Activated T-helper 2 cell treated with anti-CD3 and anti-CD28 coated beads, Interferon-gamma antibody, Interleukin-2, Interleukin-4, amounts not matched to agents 10 μg/mL and 5 μg/mL and 100 μg/mL, durations not matched to agents 14 hours and 24 hours and 36 hours (primary cell): ENCODE measurements at regions of chr1 and their contacts with region 1.

Region 1: GRCh38 chr1:10170239-10170574 is 40.2 kb upstream of the KIF1B start:
- DNase-seq: peak; percentile 18
- H3K4me3 Mint-ChIP-seq: peak overlapping the region; percentile 63
- H3K27ac Mint-ChIP-seq: peak overlapping the region; percentile 87
- H3K4me1 Mint-ChIP-seq: peaks cover 54% of the 10 kb centered on the region
- H3K27me3 Mint-ChIP-seq: no peaks in the 10 kb centered on the region

Region 2: DNA sequence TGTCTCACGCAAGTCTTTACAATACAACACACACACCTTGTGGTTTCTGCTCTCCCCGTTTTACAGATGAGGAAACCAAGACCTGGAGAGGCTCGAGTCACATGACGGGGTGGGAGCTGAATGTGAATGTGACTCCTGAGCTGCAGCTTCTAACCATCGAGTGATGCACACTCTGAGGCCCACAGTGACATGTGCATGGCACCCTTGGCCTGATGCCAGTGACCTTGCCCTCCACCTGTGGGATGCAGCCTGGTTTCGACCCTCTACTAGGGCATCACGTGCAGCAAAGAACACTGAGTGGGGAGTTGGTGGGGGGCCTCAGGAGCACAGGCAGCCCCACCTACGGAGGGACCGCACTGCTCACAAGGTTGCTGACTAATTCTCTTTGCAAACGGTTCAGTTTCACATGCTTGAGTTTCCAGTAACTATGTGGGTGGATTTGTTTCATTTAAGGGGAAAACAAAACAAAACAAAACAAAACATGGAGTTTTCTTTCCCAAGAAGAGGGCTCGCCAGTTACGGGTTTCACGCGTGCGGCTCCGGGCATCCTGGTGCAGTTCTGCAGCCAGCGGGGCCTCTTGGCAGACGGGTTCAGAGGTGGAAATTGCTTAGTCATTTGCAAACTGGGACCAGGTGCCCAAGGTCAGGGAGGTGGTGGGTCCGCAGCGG is 854.7 kb before region 1 on chr1:
- intact Hi-C with region 1: no loop called
- DNase-seq: peak; percentile 55
- H3K4me3 Mint-ChIP-seq: peak overlapping the region; percentile 57
- H3K27ac Mint-ChIP-seq: peak overlapping the region; percentile 89
- H3K4me1 Mint-ChIP-seq: peaks cover 35% of the 10 kb centered on the region
- H3K27me3 Mint-ChIP-seq: no peaks in the 10 kb centered on the region

Region 3: GRCh38 chr1:10186331-10187025 is 16.3 kb after region 1 on chr1:
- intact Hi-C with region 1: loop called (anchors 1 kb)
- DNase-seq: no peak
- H3K4me3 Mint-ChIP-seq: no peak overlapping the region
- H3K27ac Mint-ChIP-seq: no peak overlapping the region
- H3K4me1 Mint-ChIP-seq: peaks cover 10% of the 10 kb centered on the region
- H3K27me3 Mint-ChIP-seq: no peaks in the 10 kb centered on the region

Region 4: DNA sequence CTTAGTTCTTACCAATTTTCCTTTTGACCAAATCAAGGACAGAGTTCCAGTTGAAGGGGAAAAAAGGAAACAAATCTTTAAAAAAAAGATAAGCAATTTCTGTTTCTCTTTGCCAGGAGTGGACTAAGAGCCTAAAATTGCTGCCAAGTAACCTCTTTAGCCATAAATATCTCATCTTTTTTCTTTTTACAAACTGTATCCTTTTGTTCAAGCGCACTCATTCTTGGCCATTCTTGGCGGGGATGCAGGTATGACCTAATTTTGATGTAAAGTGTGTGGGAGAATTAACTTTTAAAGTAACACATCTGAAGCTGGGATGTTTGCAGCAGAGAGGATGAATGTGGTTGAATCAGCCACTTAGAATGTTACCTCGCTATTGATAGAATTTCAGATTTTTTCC is 26.8 kb after region 1 on chr1:
- intact Hi-C with region 1: no loop called
- DNase-seq: no peak
- H3K4me3 Mint-ChIP-seq: no peak overlapping the region
- H3K27ac Mint-ChIP-seq: no peak overlapping the region
- H3K4me1 Mint-ChIP-seq: peaks cover 2% of the 10 kb centered on the region
- H3K27me3 Mint-ChIP-seq: peaks cover 13% of the 10 kb centered on the region

Region 5: GRCh38 chr1:10209905-10210810 is 40.0 kb after region 1 on chr1 and contains the start of gene KIF1B:
- intact Hi-C with region 1: loop called (anchors 2 kb)
- DNase-seq: peak; percentile 95
- H3K4me3 Mint-ChIP-seq: peak within 1 kb of the TSS; percentile 89
- H3K27ac Mint-ChIP-seq: peak within 1 kb of the TSS; percentile 84
- H3K4me1 Mint-ChIP-seq: peaks cover 33% of the 10 kb centered on the region
- H3K27me3 Mint-ChIP-seq: peaks cover 4% of the 10 kb centered on the region
- total RNA-seq, gene KIF1B: 21.9 and 23.8 TPM in 2 replicates

Region 6: GRCh38 chr1:10283318-10283984 is 113.2 kb after region 1 on chr1:
- intact Hi-C with region 1: loop called (anchors 1 kb)
- DNase-seq: peak; percentile 17
- H3K4me3 Mint-ChIP-seq: no peak overlapping the region
- H3K27ac Mint-ChIP-seq: peak overlapping the region; percentile 76
- H3K4me1 Mint-ChIP-seq: peaks cover 26% of the 10 kb centered on the region
- H3K27me3 Mint-ChIP-seq: no peaks in the 10 kb centered on the region